Endothelial cell of umbilical vein (primary cell): ENCODE measurements at regions of chr11 and their contacts with region 1.

Region 1: DNA sequence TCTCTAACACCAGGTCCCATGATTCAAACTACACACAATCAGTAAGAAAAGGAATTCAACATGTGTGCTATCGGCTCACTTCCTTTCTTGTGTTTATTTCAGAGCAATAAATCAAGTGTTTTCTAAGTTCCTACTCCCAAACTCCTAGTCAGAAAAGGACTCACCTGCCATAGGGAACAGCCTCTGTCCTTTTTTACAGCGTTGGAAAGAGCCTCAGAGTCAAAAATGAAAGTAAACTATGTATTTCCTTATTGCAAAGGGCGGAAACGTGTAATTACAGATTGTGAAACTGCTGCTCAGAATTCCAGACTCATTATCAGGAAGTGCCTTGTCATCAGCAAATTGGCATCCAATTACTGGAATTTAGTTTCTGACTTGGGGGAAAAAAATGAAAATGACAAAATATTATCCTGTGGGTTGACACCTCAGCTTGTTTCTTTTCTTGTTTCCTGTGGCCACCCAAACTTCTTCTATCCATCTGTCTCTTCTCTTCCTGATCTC is at the start of gene CASP4:
- DNase-seq: peak; percentile 93
- H3K4me3 ChIP-seq: peak within 1 kb of the TSS; percentile 48 to 93 (median 91)
- H3K27ac ChIP-seq: peak within 1 kb of the TSS; percentile 92
- H3K4me1 ChIP-seq: peaks cover 20% of the 10 kb centered on the region
- H3K27me3 ChIP-seq: no peaks in the 10 kb centered on the region
- CTCF ChIP-seq: no peak
- POLR2A ChIP-seq: peak; percentile 56
- total RNA-seq, gene CASP4: 77.4 and 83.1 TPM in 2 replicates

Region 2: GRCh38 chr11:104897891-104898684 is 70.3 kb before region 1 on chr11 and contains the start of gene CASP12:
- CTCF ChIA-PET with region 1: interaction called, 3 read pairs
- POLR2A ChIA-PET with region 1: no interaction called
- dilution Hi-C with region 1: no loop called
- intact Hi-C with region 1: loop called (anchors 1 kb)
- DNase-seq: peak; percentile 97
- H3K4me3 ChIP-seq: peak within 1 kb of the TSS in 2 of 3 experiments; percentile 23 to 41
- H3K27ac ChIP-seq: peak within 1 kb of the TSS; percentile 74
- H3K4me1 ChIP-seq: peaks cover 30% of the 10 kb centered on the region
- H3K27me3 ChIP-seq: no peaks in the 10 kb centered on the region
- CTCF ChIP-seq: no peak
- POLR2A ChIP-seq: peak; percentile 14
- total RNA-seq, gene CASP12: 2.6 and 3.9 TPM in 2 replicates

Region 3: DNA sequence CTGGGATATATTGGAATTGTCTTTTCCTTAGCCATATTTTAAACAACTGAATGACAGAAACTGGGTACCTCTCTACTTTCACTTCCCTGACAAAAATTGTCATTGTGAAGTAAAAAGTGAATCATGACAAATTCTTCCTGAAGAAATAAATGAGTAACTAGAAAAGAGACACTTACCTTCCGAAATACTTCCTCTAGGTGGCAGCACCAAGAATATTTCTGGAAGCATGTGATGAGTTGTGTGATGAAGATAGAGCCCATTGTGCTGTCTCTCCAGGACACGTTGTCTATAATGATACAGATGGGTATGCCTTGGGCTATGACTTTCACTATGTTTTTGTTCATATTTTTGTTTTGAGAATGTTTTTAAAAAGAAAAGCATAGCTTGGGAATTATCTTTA is 21.5 kb before region 1 on chr11:
- CTCF ChIA-PET with region 1: interaction called, 17 read pairs
- POLR2A ChIA-PET with region 1: no interaction called
- dilution Hi-C with region 1: no loop called
- intact Hi-C with region 1: loop called (anchors 2 kb)
- DNase-seq: peak; percentile 74
- H3K4me3 ChIP-seq: no peak overlapping the region
- H3K27ac ChIP-seq: no peak overlapping the region
- H3K4me1 ChIP-seq: no peaks in the 10 kb centered on the region
- H3K27me3 ChIP-seq: no peaks in the 10 kb centered on the region
- CTCF ChIP-seq: peak; percentile 33 to 35
- POLR2A ChIP-seq: no peak

Region 4: GRCh38 chr11:105156231-105156630 is 187.8 kb after region 1 on chr11:
- CTCF ChIA-PET with region 1: no interaction called
- POLR2A ChIA-PET with region 1: no interaction called
- dilution Hi-C with region 1: no loop called
- intact Hi-C with region 1: loop called (anchors 1 kb)
- DNase-seq: peak; percentile 61
- H3K4me3 ChIP-seq: no peak overlapping the region
- H3K27ac ChIP-seq: no peak overlapping the region
- H3K4me1 ChIP-seq: peaks cover 10% of the 10 kb centered on the region
- H3K27me3 ChIP-seq: no peaks in the 10 kb centered on the region
- CTCF ChIP-seq: no peak
- POLR2A ChIP-seq: no peak

Region 5: GRCh38 chr11:105577641-105578040 is 609.2 kb after region 1 on chr11:
- CTCF ChIA-PET with region 1: no interaction called
- POLR2A ChIA-PET with region 1: no interaction called
- dilution Hi-C with region 1: no loop called
- intact Hi-C with region 1: loop called (anchors 10 kb)
- DNase-seq: peak; percentile 29
- H3K4me3 ChIP-seq: no peak overlapping the region
- H3K27ac ChIP-seq: no peak overlapping the region
- H3K4me1 ChIP-seq: no peaks in the 10 kb centered on the region
- H3K27me3 ChIP-seq: no peaks in the 10 kb centered on the region
- CTCF ChIP-seq: no peak
- POLR2A ChIP-seq: no peak